Activated CD4-positive, alpha-beta T cell treated with anti-CD3 and anti-CD28 coated beads, Interleukin-2, amount 10 ng/mL, durations not matched to agents 24 days and 14 days (primary cell): ENCODE measurements at regions of chr22 and their contacts with region 1.

Region 1: GRCh38 chr22:40436505-40437451 is 66.4 kb downstream of the SGSM3 start:
- DNase-seq: peak; percentile 72
- H3K4me3 Mint-ChIP-seq: no peak overlapping the region
- H3K27ac Mint-ChIP-seq: peak overlapping the region; percentile 77
- H3K4me1 Mint-ChIP-seq: peaks cover 36% of the 10 kb centered on the region
- H3K27me3 Mint-ChIP-seq: no peaks in the 10 kb centered on the region

Region 2: DNA sequence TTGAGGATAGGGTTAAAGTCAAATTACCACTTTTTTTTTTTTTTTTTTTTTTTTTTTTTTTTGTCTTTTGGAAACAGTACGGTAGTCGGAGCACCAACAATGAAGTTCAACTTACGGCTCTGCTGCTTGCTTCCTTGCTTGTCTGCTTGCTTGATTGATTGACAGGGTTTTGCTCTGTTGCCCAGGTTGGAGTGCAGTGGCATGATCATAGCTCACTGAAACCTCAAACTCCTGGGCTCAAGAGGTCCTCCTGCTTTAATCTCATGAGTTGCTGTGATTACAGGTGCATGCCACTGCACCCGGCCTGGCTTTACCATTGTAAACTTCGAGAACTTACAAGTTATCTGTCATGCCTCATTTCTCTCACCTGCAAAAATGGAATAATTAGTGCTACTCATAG is 60.6 kb before region 1 on chr22:
- intact Hi-C with region 1: no loop called
- DNase-seq: no peak
- H3K4me3 Mint-ChIP-seq: no peak overlapping the region
- H3K27ac Mint-ChIP-seq: no peak overlapping the region
- H3K4me1 Mint-ChIP-seq: peaks cover 16% of the 10 kb centered on the region
- H3K27me3 Mint-ChIP-seq: no peaks in the 10 kb centered on the region

Region 3: DNA sequence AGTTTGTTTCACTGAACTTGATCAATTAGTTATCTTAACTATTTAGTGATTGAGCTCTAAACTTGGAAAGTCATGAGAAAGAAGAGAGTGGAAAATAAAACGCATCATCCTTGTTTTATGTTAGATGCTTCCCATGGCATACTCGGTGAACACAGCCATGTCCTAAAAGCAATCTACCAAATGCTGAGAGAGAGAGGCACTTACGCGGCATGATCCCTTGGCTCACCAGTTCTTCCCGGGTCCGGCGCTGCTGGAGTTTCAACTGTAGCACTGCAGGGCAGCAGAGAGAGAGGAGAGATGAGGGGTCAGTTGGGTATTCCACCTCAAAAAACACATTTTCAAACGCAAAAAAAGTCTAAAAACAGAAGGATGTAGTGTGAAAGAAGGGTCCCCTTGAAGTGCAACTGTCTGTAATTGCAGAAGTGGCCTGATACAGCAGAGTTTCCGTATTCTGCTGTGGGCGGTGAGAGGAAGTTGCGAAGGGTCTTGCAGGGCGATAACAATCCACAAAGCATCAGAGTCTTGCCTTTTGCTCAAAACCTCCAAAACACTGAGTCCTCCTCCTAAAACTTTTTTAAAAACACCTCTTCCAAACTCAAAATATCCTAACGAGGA is 26.3 kb after region 1 on chr22:
- intact Hi-C with region 1: loop called (anchors 2 kb)
- DNase-seq: peak; percentile 85
- H3K4me3 Mint-ChIP-seq: peak overlapping the region; percentile 98
- H3K27ac Mint-ChIP-seq: peak overlapping the region; percentile 97
- H3K4me1 Mint-ChIP-seq: peaks cover 48% of the 10 kb centered on the region
- H3K27me3 Mint-ChIP-seq: no peaks in the 10 kb centered on the region

Region 4: DNA sequence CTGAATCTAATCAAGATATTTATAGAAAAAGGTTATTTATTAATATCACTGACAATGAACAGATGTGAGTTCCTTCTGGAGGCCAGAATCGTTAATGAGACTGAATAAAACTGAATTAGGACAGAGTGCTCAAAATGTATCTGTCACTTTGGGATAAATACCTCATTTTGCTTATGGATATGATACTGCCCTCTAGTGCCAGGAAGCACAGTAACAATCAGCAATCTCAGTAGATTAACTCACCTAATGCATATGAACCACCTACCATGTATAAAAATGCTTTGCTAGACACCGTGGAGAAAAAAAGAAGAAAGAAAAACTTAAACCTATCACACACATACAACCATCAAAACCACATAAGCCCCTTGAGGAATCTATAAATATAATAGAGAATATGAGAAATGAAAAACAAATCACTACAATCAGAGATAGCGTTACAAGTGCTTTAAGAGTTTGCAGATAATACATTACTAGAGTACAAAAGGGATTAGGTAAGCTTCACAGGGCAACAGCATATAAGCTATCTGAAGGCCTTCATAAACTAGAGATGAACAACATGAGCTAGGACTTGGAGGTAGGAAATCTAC is 51.0 kb after region 1 on chr22:
- intact Hi-C with region 1: loop called (anchors 1 kb)
- DNase-seq: peak; percentile 65
- H3K4me3 Mint-ChIP-seq: no peak overlapping the region
- H3K27ac Mint-ChIP-seq: no peak overlapping the region
- H3K4me1 Mint-ChIP-seq: peaks cover 23% of the 10 kb centered on the region
- H3K27me3 Mint-ChIP-seq: no peaks in the 10 kb centered on the region

Region 5: GRCh38 chr22:40645579-40646197 is 208.9 kb after region 1 on chr22:
- intact Hi-C with region 1: loop called (anchors 1 kb)
- DNase-seq: no peak
- H3K4me3 Mint-ChIP-seq: no peak overlapping the region
- H3K27ac Mint-ChIP-seq: no peak overlapping the region
- H3K4me1 Mint-ChIP-seq: peaks cover 14% of the 10 kb centered on the region
- H3K27me3 Mint-ChIP-seq: no peaks in the 10 kb centered on the region